Activated T-helper 1 cell treated with anti-CD3 and anti-CD28 coated beads, Interleukin-12 subunit alpha, Interleukin-12 subunit beta, Interleukin-2, Interleukin-4 antibody, amounts not matched to agents 30 ng/mL and 10 ng/mL and 1 ng/mL, durations not matched to agents 14 hours and 24 hours and 36 hours (primary cell): ENCODE measurements at regions of chr15 and their contacts with region 1.

Region 1: DNA sequence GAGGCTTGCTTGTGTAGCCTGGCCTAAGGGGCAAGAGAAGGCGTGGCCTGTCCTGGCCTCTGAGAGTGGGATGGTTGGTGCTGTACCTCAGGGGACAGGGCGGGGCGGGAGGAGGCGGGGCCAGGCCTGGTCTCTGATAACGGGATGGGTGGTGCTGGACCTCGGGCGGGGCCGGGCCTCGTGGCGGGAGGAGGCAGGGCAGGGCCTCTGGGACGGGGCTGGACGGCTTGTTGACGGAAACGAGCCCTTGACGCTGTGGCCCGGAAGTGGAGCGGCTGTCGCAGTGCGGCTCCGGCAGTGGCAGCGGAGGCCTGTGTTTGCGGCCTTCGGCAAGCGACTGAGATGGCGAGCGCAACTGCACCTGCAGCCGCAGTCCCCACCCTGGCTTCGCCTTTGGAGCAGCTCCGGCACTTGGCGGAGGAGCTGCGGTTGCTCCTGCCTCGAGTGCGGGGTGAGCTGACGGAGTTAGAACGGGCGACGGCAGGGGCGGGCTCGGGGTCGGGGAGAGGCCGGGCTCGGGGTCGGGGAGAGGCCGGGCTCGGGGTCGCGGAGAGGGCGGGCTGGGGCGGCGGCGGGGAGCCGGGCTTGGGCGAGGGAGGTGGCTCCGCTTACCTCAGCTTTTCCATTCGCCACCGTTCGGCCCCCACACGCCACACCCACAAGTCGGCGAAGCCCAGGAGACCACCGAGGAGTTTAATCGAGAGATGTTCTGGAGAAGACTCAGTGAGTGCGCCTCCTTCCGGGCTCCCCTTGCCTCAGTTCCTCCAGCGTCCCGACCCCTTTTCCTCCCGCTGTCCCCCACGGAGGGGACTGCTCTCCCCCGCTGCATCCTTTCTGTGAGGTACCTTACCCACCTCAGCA is at the start of gene CCNDBP1:
- DNase-seq: peak; percentile 88
- H3K4me3 Mint-ChIP-seq: peak within 1 kb of the TSS; percentile 96
- H3K27ac Mint-ChIP-seq: peak within 1 kb of the TSS; percentile 92
- H3K4me1 Mint-ChIP-seq: peaks cover 31% of the 10 kb centered on the region
- H3K27me3 Mint-ChIP-seq: no peaks in the 10 kb centered on the region
- total RNA-seq, gene CCNDBP1: 57.7 and 60.2 TPM in 2 replicates

Region 2: DNA sequence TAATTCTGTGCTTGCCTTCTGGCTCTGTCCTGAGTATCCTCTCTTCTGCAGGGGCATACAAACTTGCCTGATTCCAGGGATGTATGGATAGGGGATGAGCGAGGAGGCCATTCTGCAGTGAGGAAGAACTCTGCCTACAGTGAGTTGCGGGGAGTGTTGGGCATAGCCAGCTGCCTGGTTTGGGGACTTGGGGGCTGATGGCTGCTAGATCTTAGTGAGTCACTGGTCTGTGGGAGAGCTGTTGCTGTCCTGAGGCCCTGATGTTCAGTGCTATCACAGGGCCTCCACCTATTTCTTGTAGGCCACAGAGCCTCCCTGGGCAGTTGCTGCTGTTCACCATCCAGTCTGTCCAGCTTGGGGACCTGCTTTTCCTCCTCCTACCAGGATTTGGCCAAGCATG is 468.8 kb before region 1 on chr15:
- intact Hi-C with region 1: no loop called
- DNase-seq: no peak
- H3K4me3 Mint-ChIP-seq: no peak overlapping the region
- H3K27ac Mint-ChIP-seq: no peak overlapping the region
- H3K4me1 Mint-ChIP-seq: no peaks in the 10 kb centered on the region
- H3K27me3 Mint-ChIP-seq: no peaks in the 10 kb centered on the region

Region 3: GRCh38 chr15:43105778-43106485 is 79.5 kb before region 1 on chr15 and contains the start of gene UBR1:
- intact Hi-C with region 1: loop called (anchors 1 kb)
- DNase-seq: peak; percentile 87
- H3K4me3 Mint-ChIP-seq: peak within 1 kb of the TSS; percentile 90
- H3K27ac Mint-ChIP-seq: peak within 1 kb of the TSS; percentile 92
- H3K4me1 Mint-ChIP-seq: peaks cover 45% of the 10 kb centered on the region
- H3K27me3 Mint-ChIP-seq: no peaks in the 10 kb centered on the region
- total RNA-seq, gene UBR1: 29.1 and 35.3 TPM in 2 replicates

Region 4: GRCh38 chr15:43153269-43153668 is 32.1 kb before region 1 on chr15:
- intact Hi-C with region 1: no loop called
- DNase-seq: no peak
- H3K4me3 Mint-ChIP-seq: peak overlapping the region; percentile 52
- H3K27ac Mint-ChIP-seq: peak overlapping the region; percentile 31
- H3K4me1 Mint-ChIP-seq: peaks cover 17% of the 10 kb centered on the region
- H3K27me3 Mint-ChIP-seq: no peaks in the 10 kb centered on the region

Region 5: GRCh38 chr15:43165801-43166325 is 19.5 kb before region 1 on chr15:
- intact Hi-C with region 1: no loop called
- DNase-seq: no peak
- H3K4me3 Mint-ChIP-seq: no peak overlapping the region
- H3K27ac Mint-ChIP-seq: no peak overlapping the region
- H3K4me1 Mint-ChIP-seq: peaks cover 4% of the 10 kb centered on the region
- H3K27me3 Mint-ChIP-seq: no peaks in the 10 kb centered on the region

Region 6: GRCh38 chr15:43204016-43204901 is 18.9 kb after region 1 on chr15:
- intact Hi-C with region 1: loop called (anchors 1 kb)
- DNase-seq: peak; percentile 24
- H3K4me3 Mint-ChIP-seq: no peak overlapping the region
- H3K27ac Mint-ChIP-seq: no peak overlapping the region
- H3K4me1 Mint-ChIP-seq: peaks cover 17% of the 10 kb centered on the region
- H3K27me3 Mint-ChIP-seq: peaks cover 6% of the 10 kb centered on the region

Region 7: GRCh38 chr15:43249699-43250203 is 64.4 kb after region 1 on chr15:
- intact Hi-C with region 1: no loop called
- DNase-seq: no peak
- H3K4me3 Mint-ChIP-seq: peak overlapping the region; percentile 32
- H3K27ac Mint-ChIP-seq: peak overlapping the region; percentile 69
- H3K4me1 Mint-ChIP-seq: peaks cover 60% of the 10 kb centered on the region
- H3K27me3 Mint-ChIP-seq: no peaks in the 10 kb centered on the region

Region 8: DNA sequence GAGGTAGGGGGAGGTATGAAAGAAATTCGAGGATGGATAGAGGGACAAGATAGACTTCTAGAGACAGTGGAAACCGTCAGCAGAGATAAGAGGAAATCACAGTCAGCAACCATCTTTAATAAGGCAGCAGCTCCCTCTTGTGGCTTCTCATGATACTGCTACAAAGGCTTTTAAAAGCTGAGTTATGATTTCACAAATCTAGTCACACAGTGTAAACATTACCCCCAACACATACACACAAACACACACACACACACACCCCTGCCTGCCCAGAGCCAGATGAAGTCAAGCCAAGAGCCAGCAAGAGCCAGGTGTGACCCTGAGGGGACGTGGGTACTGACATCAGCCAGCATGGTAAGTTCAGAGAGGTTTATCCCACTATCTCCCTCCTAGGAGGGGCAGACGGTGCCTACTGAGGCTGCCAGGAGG is 100.2 kb after region 1 on chr15:
- intact Hi-C with region 1: loop called (anchors 1 kb)
- DNase-seq: peak; percentile 44
- H3K4me3 Mint-ChIP-seq: no peak overlapping the region
- H3K27ac Mint-ChIP-seq: no peak overlapping the region
- H3K4me1 Mint-ChIP-seq: peaks cover 5% of the 10 kb centered on the region
- H3K27me3 Mint-ChIP-seq: peaks cover 6% of the 10 kb centered on the region

Region 9: DNA sequence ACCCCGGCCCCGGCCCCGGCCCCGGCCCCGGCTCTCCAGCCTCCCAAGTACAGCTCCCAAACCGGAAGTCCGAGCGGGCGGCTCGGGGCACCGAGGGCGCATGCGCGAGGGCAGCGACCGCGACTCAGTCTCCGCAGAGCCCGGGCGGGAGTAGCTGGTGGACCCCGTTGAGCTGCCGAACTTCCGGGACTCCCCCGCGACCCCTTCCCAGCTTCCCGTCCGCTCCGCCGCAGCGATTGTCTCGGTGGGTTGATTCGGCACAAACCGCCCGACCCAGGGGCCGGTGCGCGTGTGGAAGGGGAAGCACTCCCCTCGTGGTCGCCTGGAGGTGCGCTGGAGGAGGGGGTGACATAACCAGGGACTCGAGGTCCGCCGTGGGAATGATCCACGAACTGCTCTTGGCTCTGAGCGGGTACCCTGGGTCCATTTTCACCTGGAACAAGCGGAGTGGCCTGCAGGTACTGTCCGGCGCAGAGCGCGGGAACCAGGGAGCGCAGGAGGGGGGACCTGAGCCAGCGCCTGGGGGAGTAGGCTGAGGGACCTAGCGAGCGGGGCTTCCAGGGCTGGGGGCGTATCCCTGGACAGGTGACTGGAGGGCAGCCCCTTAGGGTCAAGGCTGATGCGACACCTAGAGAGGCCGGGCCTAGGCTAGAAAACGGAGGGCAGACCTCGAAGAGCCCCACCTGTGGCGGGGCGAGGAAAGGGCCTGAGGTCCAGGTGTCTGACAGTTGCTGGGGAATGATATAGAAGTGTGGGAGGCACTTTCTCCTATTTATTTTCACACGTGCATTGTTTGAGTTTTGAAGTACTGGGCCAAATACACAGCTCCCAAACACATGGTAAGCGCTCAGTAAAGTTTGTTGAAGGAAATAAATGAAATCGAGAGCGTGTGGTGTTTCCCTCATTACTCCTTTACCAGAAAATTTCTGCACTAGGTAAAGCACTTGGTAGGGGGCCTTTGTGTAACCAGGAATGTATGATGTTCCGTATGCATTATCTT is 185.9 kb after region 1 on chr15 and contains the starts of genes TUBGCP4 and ZSCAN29:
- intact Hi-C with region 1: loop called (anchors 5 kb)
- DNase-seq: peak; percentile 77
- H3K4me3 Mint-ChIP-seq: peak within 1 kb of the TSS; percentile 92
- H3K27ac Mint-ChIP-seq: peak within 1 kb of the TSS; percentile 83
- H3K4me1 Mint-ChIP-seq: peaks cover 54% of the 10 kb centered on the region
- H3K27me3 Mint-ChIP-seq: no peaks in the 10 kb centered on the region
- total RNA-seq, gene TUBGCP4: 46.5 and 47.2 TPM in 2 replicates
- total RNA-seq, gene ZSCAN29: 32.9 and 34.9 TPM in 2 replicates

Region 10: GRCh38 chr15:43510200-43511011 is 325.0 kb after region 1 on chr15:
- intact Hi-C with region 1: loop called (anchors 1 kb)
- DNase-seq: peak; percentile 98
- H3K4me3 Mint-ChIP-seq: peak overlapping the region; percentile 87
- H3K27ac Mint-ChIP-seq: peak overlapping the region; percentile 92
- H3K4me1 Mint-ChIP-seq: peaks cover 56% of the 10 kb centered on the region
- H3K27me3 Mint-ChIP-seq: peaks cover 6% of the 10 kb centered on the region